ENCODE measurements at regions of chr4 and their contacts with region 1.

Region 1: GRCh38 chr4:109067508-109068210 is 234.8 kb downstream of the COL25A1 start:
- DNase-seq: peak; percentile 61
- ATAC-seq: peak; percentile 77

Region 2: GRCh38 chr4:107380836-107381415 is 1686.7 kb before region 1 on chr4:
- intact Hi-C with region 1: no loop called
- DNase-seq: no peak
- ATAC-seq: peak; percentile 62

Region 3: DNA sequence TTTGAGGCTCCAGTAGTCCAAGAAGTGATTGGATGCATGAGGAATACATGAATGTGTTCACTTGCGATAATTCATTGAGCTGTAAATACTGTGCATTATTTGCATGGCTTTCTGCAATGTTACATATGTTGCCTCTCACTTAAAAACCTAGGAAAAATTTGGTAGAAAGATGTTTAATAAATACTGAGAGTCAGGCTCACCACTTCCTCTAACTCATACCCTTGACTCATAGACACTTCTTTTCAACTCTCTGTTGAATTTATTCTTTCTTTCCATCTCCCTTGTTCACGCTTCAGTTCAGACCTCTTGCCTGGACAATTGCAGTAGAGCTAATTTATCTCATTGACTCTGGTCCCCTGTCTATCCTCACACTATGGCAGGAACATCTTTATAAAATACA is 863.1 kb before region 1 on chr4:
- intact Hi-C with region 1: no loop called
- DNase-seq: no peak
- ATAC-seq: no peak

Region 4: GRCh38 chr4:108433832-108434231 is 633.8 kb before region 1 on chr4:
- intact Hi-C with region 1: loop called (anchors 5 kb)
- DNase-seq: no peak
- ATAC-seq: no peak

Measured in sciatic nerve (tissue), 2 donors.